ENCODE measurements at regions of chr17 and their contacts with region 1.

Region 1: GRCh38 chr17:50681263-50682210 is 26.2 kb downstream of the ANKRD40 start:
- DNase-seq: peak; percentile 88
- H3K4me3 ChIP-seq: no peak overlapping the region
- H3K27ac ChIP-seq: no peak overlapping the region
- H3K4me1 ChIP-seq: peaks cover 8% of the 10 kb centered on the region
- H3K27me3 ChIP-seq: no peaks in the 10 kb centered on the region
- CTCF ChIP-seq: peak; percentile 81

Region 2: GRCh38 chr17:50626037-50626574 is 55.4 kb before region 1 on chr17:
- CTCF ChIA-PET with region 1: interaction called, 10 read pairs
- POLR2A ChIA-PET with region 1: no interaction called
- intact Hi-C with region 1: loop called (anchors 1 kb)
- DNase-seq: peak; percentile 81
- H3K4me3 ChIP-seq: no peak overlapping the region
- H3K27ac ChIP-seq: no peak overlapping the region
- H3K4me1 ChIP-seq: peaks cover 22% of the 10 kb centered on the region
- H3K27me3 ChIP-seq: no peaks in the 10 kb centered on the region
- CTCF ChIP-seq: peak; percentile 76